Ascending aorta (tissue), 2 donors: ENCODE measurements at regions of chr2 and their contacts with region 1.

Region 1: DNA sequence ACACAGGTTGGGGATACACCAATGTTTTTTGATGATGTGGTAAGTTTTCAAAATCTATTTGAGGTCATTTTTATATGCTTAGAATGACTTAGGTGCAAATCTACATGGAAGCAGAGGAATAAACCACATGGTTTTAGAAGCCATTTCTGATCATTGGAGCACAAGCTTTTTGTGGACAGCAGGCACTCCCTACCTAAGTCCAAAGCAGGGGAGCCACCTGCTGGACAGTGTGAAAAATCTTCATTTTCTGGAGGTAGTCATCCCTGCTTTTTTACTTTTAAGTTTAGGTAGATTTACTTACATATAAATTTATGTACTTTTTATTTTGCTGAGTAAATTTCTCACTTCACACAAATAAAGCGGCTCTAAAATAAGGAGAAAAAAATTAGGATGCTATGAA is 323.2 kb downstream of the PLCL1 start:
- DNase-seq: no peak
- H3K4me3 ChIP-seq: no peak overlapping the region
- H3K27ac ChIP-seq: no peak overlapping the region
- H3K4me1 ChIP-seq: peaks cover 0 to 6% of the 10 kb centered on the region in 2 donors
- H3K27me3 ChIP-seq: no peaks in the 10 kb centered on the region
- CTCF ChIP-seq: peak; percentile 58 to 74 (median 62)

Region 2: GRCh38 chr2:198084136-198084535 is 43.5 kb before region 1 on chr2:
- intact Hi-C with region 1: loop called (anchors 2 kb)
- DNase-seq: no peak
- H3K4me3 ChIP-seq: no peak overlapping the region
- H3K27ac ChIP-seq: no peak overlapping the region
- H3K4me1 ChIP-seq: peaks cover 0 to under 1% of the 10 kb centered on the region in 2 donors
- H3K27me3 ChIP-seq: no peaks in the 10 kb centered on the region
- CTCF ChIP-seq: no peak

Region 3: DNA sequence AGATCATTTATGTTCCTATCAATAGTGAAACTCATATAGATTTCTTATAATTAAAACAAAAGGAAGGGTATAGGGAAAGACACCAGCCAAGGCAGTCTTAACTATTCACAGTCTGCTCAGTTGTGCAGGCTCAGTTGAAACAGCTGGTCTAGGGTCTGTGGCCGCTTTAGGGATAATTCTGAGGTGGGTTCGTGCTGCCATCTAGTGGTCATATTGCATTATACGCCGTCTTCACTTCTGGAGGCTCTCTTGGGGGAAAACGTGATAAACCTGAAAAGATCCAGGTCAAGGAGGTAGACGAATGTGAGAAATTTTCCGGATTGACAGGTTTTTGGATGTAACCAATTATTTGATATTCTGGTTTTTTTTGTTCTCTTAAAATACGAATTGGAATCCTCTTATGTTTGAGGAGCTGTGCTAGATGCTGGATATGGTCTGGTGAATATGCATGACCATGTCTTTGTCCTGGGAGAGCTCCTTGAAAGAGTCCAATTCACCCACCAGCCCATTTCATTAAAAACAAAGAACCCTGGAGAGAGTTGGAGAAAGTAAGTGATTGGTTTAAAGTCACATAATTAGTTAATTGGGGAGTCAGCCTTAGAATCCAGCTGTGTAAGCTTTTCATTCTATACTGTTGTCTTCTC is 169.2 kb after region 1 on chr2:
- intact Hi-C with region 1: loop called (anchors 5 kb)
- DNase-seq: peak in 1 of 2 donors; percentile 71
- H3K4me3 ChIP-seq: no peak overlapping the region
- H3K27ac ChIP-seq: no peak overlapping the region
- H3K4me1 ChIP-seq: no peaks in the 10 kb centered on the region
- H3K27me3 ChIP-seq: no peaks in the 10 kb centered on the region
- CTCF ChIP-seq: peak; percentile 60 to 88 (median 77)